ENCODE measurements at regions of chr3 and their contacts with region 1.

Region 1: GRCh38 chr3:98022978-98023820 is 11.9 kb downstream of the GABRR3 start:
- DNase-seq: peak; percentile 81
- ATAC-seq: peak; percentile 53
- H3K4me3 ChIP-seq: no peak overlapping the region
- H3K4me3 Mint-ChIP-seq: no peak overlapping the region
- H3K27ac ChIP-seq: no peak overlapping the region
- H3K27ac Mint-ChIP-seq: no peak overlapping the region
- H3K4me1 ChIP-seq: no peaks in the 10 kb centered on the region
- H3K4me1 Mint-ChIP-seq: peaks cover 1% of the 10 kb centered on the region
- H3K27me3 ChIP-seq: no peaks in the 10 kb centered on the region
- H3K27me3 Mint-ChIP-seq: peaks cover 12% of the 10 kb centered on the region
- CTCF ChIP-seq: peak; percentile 98

Region 2: GRCh38 chr3:96863129-96863740 is 1160.0 kb before region 1 on chr3:
- CTCF ChIA-PET with region 1: no interaction called
- POLR2A ChIA-PET with region 1: no interaction called
- intact Hi-C with region 1: loop called (anchors 5 kb)
- DNase-seq: no peak
- ATAC-seq: no peak
- H3K4me3 ChIP-seq: no peak overlapping the region
- H3K4me3 Mint-ChIP-seq: no peak overlapping the region
- H3K27ac ChIP-seq: no peak overlapping the region
- H3K27ac Mint-ChIP-seq: no peak overlapping the region
- H3K4me1 ChIP-seq: no peaks in the 10 kb centered on the region
- H3K4me1 Mint-ChIP-seq: no peaks in the 10 kb centered on the region
- H3K27me3 ChIP-seq: no peaks in the 10 kb centered on the region
- H3K27me3 Mint-ChIP-seq: no peaks in the 10 kb centered on the region
- CTCF ChIP-seq: no peak

Region 3: GRCh38 chr3:97793420-97794019 is 229.7 kb before region 1 on chr3:
- CTCF ChIA-PET with region 1: interaction called, 239 read pairs
- POLR2A ChIA-PET with region 1: no interaction called
- intact Hi-C with region 1: loop called (anchors 1 kb)
- DNase-seq: peak; percentile 71
- ATAC-seq: peak; percentile 21
- H3K4me3 ChIP-seq: no peak overlapping the region
- H3K4me3 Mint-ChIP-seq: no peak overlapping the region
- H3K27ac ChIP-seq: no peak overlapping the region
- H3K27ac Mint-ChIP-seq: no peak overlapping the region
- H3K4me1 ChIP-seq: no peaks in the 10 kb centered on the region
- H3K4me1 Mint-ChIP-seq: no peaks in the 10 kb centered on the region
- H3K27me3 ChIP-seq: no peaks in the 10 kb centered on the region
- H3K27me3 Mint-ChIP-seq: no peaks in the 10 kb centered on the region
- CTCF ChIP-seq: peak; percentile 90

Region 4: GRCh38 chr3:97804471-97804870 is 218.7 kb before region 1 on chr3:
- CTCF ChIA-PET with region 1: interaction called, 239 read pairs
- POLR2A ChIA-PET with region 1: no interaction called
- intact Hi-C with region 1: no loop called
- DNase-seq: no peak
- ATAC-seq: no peak
- H3K4me3 ChIP-seq: no peak overlapping the region
- H3K4me3 Mint-ChIP-seq: no peak overlapping the region
- H3K27ac ChIP-seq: no peak overlapping the region
- H3K27ac Mint-ChIP-seq: no peak overlapping the region
- H3K4me1 ChIP-seq: no peaks in the 10 kb centered on the region
- H3K4me1 Mint-ChIP-seq: no peaks in the 10 kb centered on the region
- H3K27me3 ChIP-seq: no peaks in the 10 kb centered on the region
- H3K27me3 Mint-ChIP-seq: no peaks in the 10 kb centered on the region
- CTCF ChIP-seq: no peak

Region 5: DNA sequence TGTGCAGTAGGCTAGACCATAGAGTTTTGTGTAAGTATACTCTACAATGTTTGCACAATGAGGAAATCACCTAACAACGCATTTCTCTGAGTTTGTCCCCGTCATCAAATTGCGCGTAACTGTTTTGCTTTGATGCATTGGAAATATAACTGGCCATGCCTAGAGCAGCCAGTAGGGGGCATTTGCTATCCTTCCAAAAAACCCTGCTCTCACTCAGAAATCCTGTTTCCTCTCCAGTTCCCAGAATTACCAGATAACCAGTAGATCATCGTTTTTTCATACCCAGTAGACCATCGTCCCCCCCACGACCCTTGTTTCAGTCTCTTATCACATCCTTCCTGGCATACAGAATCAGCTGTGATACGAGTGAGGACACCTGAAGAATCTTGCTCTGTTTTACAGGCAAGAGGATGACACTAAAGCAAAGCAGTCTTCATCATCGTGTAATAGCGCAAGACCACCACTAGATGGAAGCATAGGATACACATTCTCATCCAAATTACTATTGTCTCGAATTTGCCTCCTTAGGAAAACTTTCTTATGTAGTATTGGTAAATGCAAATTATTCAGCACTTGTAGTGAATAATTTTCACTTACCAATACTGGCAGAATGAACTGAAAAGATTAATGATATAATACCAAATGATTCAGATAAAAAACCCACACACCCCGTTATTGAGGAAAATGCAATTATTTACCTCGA is 16.3 kb after region 1 on chr3:
- CTCF ChIA-PET with region 1: interaction called, 72 read pairs
- POLR2A ChIA-PET with region 1: no interaction called
- intact Hi-C with region 1: no loop called
- DNase-seq: peak; percentile 87
- ATAC-seq: peak; percentile 97
- H3K4me3 ChIP-seq: peak overlapping the region in 4 of 5 experiments; percentile 23 to 58 (median 42)
- H3K4me3 Mint-ChIP-seq: peak overlapping the region; percentile 85
- H3K27ac ChIP-seq: no peak overlapping the region
- H3K27ac Mint-ChIP-seq: peak overlapping the region; percentile 59
- H3K4me1 ChIP-seq: peaks cover 0 to 5% of the 10 kb centered on the region in 2 donors
- H3K4me1 Mint-ChIP-seq: peaks cover 5% of the 10 kb centered on the region
- H3K27me3 ChIP-seq: peaks cover 0 to 4% (median 0%) of the 10 kb centered on the region in 4 experiments
- H3K27me3 Mint-ChIP-seq: peaks cover 27% of the 10 kb centered on the region
- CTCF ChIP-seq: peak; percentile 98